GM13976 (cell line): ENCODE measurements at regions of chr16 and their contacts with region 1.

Region 1: GRCh38 chr16:16797239-16797638 is 418.3 kb downstream of the NPIPA7 start:
- DNase-seq: no peak
- CTCF ChIP-seq: no peak

Region 2: DNA sequence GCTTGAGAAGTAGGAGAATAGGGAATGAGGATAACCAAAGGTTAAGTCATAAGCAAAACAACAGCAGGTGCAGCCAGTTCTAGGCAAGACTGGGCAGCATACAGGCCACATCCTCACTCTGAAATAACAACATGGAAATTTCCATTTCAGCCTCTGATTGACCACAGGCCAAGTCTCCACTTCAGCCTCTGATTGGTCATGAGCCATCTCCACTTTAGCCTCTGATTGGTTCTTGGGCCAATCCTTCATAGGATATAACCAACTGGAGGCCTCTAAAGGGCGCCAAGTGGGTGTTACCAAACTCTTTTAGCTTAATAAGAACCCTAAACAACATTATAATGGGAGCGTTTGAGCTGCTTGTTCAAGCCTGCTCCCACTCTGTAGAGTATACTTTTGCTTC is 93.7 kb after region 1 on chr16:
- in situ Hi-C with region 1: loop called (anchors 25 kb)
- DNase-seq: no peak
- CTCF ChIP-seq: no peak